ENCODE measurements at regions of chr3 and their contacts with region 1.

Region 1: DNA sequence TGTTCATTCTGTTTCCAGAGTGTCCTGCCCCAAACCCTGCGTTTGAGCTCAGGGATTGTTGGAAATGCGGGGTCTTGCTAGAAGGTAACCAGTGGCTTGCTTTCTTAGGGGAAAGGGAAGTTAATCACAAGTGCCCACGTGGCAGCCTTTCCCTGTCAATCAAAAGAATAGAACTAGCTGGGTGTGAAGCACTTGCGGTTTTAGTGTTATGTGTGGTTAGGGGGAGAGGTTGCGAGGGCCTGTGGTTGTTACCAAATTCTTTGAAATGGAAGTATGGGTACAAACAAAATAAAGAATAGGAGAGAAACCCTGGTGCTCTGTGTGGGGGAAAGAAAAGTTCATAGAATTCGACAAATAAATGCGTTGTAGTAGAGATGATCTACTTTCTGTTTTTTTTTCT is 67.6 kb downstream of the FNDC3B start:
- DNase-seq: peak; percentile 68
- H3K4me3 Mint-ChIP-seq: peak overlapping the region; percentile 82
- H3K27ac Mint-ChIP-seq: peak overlapping the region; percentile 91
- H3K4me1 Mint-ChIP-seq: peaks cover 77% of the 10 kb centered on the region
- H3K27me3 Mint-ChIP-seq: no peaks in the 10 kb centered on the region

Region 2: DNA sequence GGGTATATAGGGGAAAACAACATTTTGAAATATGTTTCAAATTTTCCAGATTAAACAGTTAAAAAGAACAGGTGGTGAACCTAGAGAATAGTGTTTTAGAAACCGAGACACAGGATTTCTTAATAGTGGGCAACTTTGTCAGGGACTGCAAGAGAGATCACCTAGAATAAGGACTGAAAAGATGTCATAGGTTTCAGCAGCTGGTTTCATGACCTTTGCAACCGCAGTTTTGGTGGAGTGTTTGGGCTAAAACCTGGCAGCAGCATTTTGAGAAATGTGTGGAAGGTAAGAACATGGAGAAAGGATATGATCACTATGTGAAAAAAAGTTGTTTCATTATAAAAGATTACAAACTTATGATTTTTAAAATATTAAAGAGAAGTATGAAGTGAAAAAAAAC is 1849.8 kb before region 1 on chr3:
- intact Hi-C with region 1: loop called (anchors 5 kb)
- DNase-seq: no peak
- H3K4me3 Mint-ChIP-seq: no peak overlapping the region
- H3K27ac Mint-ChIP-seq: peak overlapping the region; percentile 72
- H3K4me1 Mint-ChIP-seq: peaks cover 34% of the 10 kb centered on the region
- H3K27me3 Mint-ChIP-seq: no peaks in the 10 kb centered on the region

Region 3: DNA sequence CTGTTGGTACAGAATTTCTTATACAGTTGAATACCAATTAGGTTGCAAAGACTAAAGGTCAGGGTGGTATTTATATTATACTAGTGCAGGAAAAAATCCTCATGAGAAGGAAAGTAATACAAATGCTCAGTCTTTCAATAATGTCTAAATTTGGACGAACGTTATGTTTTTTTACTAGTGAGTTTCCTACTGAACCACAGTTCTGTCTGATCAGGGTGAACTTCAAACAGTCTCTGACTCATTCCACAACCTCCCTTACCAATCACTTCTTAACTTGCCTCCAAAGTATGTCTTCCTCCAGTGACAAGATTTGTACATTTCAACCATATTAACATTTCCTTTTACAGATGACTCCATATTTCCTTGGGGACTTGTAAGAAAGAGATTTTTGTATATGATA is 260.4 kb before region 1 on chr3:
- intact Hi-C with region 1: loop called (anchors 10 kb)
- DNase-seq: peak; percentile 7
- H3K4me3 Mint-ChIP-seq: no peak overlapping the region
- H3K27ac Mint-ChIP-seq: no peak overlapping the region
- H3K4me1 Mint-ChIP-seq: peaks cover 20% of the 10 kb centered on the region
- H3K27me3 Mint-ChIP-seq: peaks cover 11% of the 10 kb centered on the region

Region 4: DNA sequence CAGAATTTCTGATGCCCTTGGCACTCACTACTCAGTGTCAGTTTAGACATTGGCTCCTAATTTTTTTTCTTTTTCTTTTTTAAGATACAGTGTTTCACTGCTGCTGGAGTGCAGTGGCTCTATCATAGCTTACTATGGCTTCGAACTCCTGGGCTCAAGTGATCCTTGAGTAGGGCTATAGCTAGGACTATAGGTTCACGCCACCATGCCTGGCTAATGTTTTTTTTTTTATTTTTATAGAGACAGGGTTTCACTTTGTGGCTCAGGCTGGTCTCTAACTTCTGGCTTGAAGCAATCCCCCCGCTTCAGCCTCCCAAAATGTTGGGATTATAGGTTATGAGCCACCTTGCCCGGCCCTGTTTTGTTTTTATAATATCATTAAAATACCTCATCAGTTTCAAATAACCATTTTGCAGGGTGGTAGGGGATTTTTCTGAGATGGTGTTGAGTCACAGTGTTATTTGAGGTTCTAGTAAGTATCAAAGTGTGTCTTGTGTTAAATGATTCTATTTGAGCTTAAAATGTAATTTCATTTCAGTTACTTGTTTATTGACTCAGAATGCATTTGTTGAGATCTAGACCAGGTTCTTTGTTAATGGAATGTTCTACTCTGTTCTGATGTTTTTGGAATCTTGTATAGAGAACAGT is 60.6 kb before region 1 on chr3:
- intact Hi-C with region 1: loop called (anchors 2 kb)
- DNase-seq: no peak
- H3K4me3 Mint-ChIP-seq: no peak overlapping the region
- H3K27ac Mint-ChIP-seq: no peak overlapping the region
- H3K4me1 Mint-ChIP-seq: peaks cover 30% of the 10 kb centered on the region
- H3K27me3 Mint-ChIP-seq: no peaks in the 10 kb centered on the region

Region 5: DNA sequence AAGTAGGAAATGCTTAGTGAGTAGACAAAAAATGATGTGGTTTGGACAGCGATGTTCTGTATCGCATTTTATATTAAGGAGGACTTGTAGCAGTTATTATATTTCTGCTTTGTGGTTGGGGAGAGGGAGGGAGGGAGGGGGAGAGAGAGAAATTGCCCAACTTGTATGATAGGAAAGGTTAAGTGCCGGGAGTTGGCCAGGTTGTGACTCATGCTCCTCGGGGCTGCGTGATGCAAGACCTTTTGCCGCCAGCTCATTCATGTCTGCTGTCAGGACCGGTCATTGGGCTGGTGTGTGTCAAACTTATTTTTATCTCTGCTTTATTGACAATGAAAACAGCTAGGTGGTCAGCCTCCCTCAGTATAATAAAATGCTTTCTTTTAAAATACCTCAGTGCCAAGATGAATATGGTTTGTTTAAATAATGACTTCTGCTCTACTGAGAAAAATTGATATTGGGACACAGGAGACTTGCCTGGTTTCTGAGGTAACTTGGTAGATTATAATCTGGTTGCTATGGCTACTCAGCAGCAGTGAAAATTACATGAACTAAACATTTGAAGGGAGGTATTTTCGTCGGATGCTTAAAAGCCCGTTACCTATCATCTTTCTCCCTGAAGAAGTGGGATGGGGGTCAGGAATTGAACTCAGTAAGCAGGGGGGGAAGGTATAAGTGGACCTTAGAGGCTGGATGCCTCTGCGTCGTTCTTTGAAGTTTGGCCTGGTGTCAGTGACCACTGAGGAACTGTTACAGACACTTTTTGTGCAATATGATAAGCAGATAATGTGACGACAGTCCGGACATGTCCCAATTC is 23.1 kb after region 1 on chr3:
- intact Hi-C with region 1: loop called (anchors 1 kb)
- DNase-seq: no peak
- H3K4me3 Mint-ChIP-seq: peak overlapping the region; percentile 34
- H3K27ac Mint-ChIP-seq: peak overlapping the region; percentile 83
- H3K4me1 Mint-ChIP-seq: peaks cover 67% of the 10 kb centered on the region
- H3K27me3 Mint-ChIP-seq: no peaks in the 10 kb centered on the region

Region 6: DNA sequence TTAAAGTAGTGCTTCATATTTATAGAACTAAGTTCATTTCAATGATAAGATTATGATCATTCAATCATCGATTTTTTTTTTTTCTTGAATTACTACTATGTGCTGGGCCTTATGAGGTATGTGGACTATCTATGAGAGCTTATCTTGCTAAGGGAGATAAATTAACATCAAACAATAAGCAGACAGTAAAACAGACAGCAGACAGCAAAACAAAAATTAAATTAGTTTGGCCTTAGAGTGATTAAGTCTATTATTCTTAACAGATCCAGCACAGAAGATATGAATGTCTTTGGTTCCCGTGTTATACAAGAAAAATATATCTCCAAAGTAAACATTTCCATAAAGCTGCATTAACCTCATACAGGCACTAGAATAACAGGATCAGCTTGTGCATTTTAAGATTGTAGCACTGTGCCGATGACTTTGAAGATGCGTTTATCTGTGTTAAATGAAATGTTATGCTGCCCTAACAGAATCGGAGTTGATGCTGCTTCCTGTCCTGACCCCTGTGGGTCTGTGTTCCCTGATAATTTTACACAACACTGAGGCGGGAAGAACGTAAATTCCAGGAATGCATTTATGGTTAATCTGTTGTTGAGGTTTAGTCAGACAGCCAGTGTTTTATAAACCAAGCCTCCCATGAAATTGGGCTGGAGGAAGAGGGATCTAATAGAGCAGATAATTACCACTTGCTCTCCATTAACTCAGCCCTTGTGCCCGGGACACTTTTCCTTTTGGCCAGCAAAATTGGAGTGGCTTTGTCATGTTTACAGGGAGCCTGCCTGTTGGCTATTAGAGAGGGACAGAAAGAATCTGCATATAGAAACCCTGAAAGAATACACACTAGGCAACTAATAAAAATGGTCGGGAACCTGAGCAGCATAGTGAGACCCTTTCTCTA is 260.5 kb after region 1 on chr3:
- intact Hi-C with region 1: no loop called
- DNase-seq: no peak
- H3K4me3 Mint-ChIP-seq: no peak overlapping the region
- H3K27ac Mint-ChIP-seq: no peak overlapping the region
- H3K4me1 Mint-ChIP-seq: no peaks in the 10 kb centered on the region
- H3K27me3 Mint-ChIP-seq: no peaks in the 10 kb centered on the region

Region 7: GRCh38 chr3:172511783-172512762 is 405.1 kb after region 1 on chr3:
- intact Hi-C with region 1: loop called (anchors 5 kb)
- DNase-seq: peak; percentile 69
- H3K4me3 Mint-ChIP-seq: peak overlapping the region; percentile 43
- H3K27ac Mint-ChIP-seq: peak overlapping the region; percentile 88
- H3K4me1 Mint-ChIP-seq: peaks cover 98% of the 10 kb centered on the region
- H3K27me3 Mint-ChIP-seq: no peaks in the 10 kb centered on the region

Measured in activated T-helper 1 cell treated with anti-CD3 and anti-CD28 coated beads, Interleukin-12 subunit alpha, Interleukin-12 subunit beta, Interleukin-2, Interleukin-4 antibody, amounts not matched to agents 30 ng/mL and 10 ng/mL and 1 ng/mL, durations not matched to agents 14 hours and 24 hours and 36 hours (primary cell).